Tibial artery (tissue), 4 donors: ENCODE measurements at regions of chr6 and their contacts with region 1.

Region 1: GRCh38 chr6:35202066-35202546 is 11.7 kb upstream of the SCUBE3 start:
- DNase-seq: no peak
- H3K4me3 ChIP-seq: no peak overlapping the region
- H3K27ac ChIP-seq: no peak overlapping the region
- H3K4me1 ChIP-seq: no peaks in the 10 kb centered on the region
- H3K27me3 ChIP-seq: no peaks in the 10 kb centered on the region
- CTCF ChIP-seq: no peak

Region 2: DNA sequence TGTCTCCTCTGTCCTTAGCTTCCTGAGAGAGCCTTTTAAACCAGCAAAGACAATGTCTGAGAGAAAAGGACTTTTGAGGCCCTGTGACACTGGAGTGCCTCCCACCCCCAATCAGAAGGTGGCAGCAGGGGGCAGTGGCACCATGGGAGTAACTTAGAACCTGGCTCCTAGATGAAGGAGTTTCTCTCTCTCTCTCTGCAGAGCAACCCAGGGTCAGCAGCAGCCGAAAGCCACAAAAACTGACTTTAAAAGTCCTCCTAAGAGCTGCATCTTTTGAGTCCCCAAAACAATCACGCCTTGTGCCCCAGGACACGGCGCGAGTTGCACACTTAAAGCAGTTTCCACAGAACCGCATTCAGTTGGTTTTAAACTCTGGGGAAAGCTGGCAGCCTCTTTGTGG is 55.7 kb before region 1 on chr6:
- intact Hi-C with region 1: loop called (anchors 2 kb)
- DNase-seq: peak; percentile 41 to 80
- H3K4me3 ChIP-seq: no peak overlapping the region
- H3K27ac ChIP-seq: peak overlapping the region in 1 of 2 donors; percentile 29
- H3K4me1 ChIP-seq: peaks cover 0 to 29% (median 14%) of the 10 kb centered on the region in 4 donors
- H3K27me3 ChIP-seq: no peaks in the 10 kb centered on the region
- CTCF ChIP-seq: peak; percentile 79 to 80

Region 3: GRCh38 chr6:35191889-35192288 is 10.2 kb before region 1 on chr6:
- intact Hi-C with region 1: loop called (anchors 1 kb)
- DNase-seq: no peak
- H3K4me3 ChIP-seq: no peak overlapping the region
- H3K27ac ChIP-seq: no peak overlapping the region
- H3K4me1 ChIP-seq: peaks cover 0 to 4% (median 0%) of the 10 kb centered on the region in 4 donors
- H3K27me3 ChIP-seq: no peaks in the 10 kb centered on the region
- CTCF ChIP-seq: no peak